ENCODE measurements at regions of chr1 and their contacts with region 1.

Region 1: GRCh38 chr1:22641906-22642636 is 1.4 kb upstream of the C1QC start:
- DNase-seq: peak; percentile 89
- CTCF ChIP-seq: peak; percentile 93

Region 2: GRCh38 chr1:22131875-22132486 is 510.1 kb before region 1 on chr1:
- in situ Hi-C with region 1: loop called (anchors 25 kb)
- DNase-seq: peak; percentile 91
- CTCF ChIP-seq: peak; percentile 93

Region 3: GRCh38 chr1:22416555-22417454 is 225.3 kb before region 1 on chr1:
- in situ Hi-C with region 1: loop called (anchors 10 kb)
- DNase-seq: peak; percentile 84
- CTCF ChIP-seq: peak; percentile 80

Region 4: GRCh38 chr1:22473952-22474351 is 168.1 kb before region 1 on chr1:
- in situ Hi-C with region 1: no loop called
- DNase-seq: no peak
- CTCF ChIP-seq: no peak

Region 5: GRCh38 chr1:22841860-22842281 is 199.8 kb after region 1 on chr1:
- in situ Hi-C with region 1: no loop called
- DNase-seq: no peak
- CTCF ChIP-seq: no peak

Measured in GM13976 (cell line).